ENCODE measurements at regions of chr15 and their contacts with region 1.

Region 1: GRCh38 chr15:63759752-63760151 is 74.0 kb downstream of the HERC1 start:
- DNase-seq: no peak
- H3K4me3 ChIP-seq: no peak overlapping the region
- H3K27ac ChIP-seq: no peak overlapping the region
- H3K4me1 ChIP-seq: peaks cover 9 to 22% of the 10 kb centered on the region in 2 donors
- H3K27me3 ChIP-seq: no peaks in the 10 kb centered on the region
- CTCF ChIP-seq: no peak
- POLR2A ChIP-seq: no peak

Region 2: DNA sequence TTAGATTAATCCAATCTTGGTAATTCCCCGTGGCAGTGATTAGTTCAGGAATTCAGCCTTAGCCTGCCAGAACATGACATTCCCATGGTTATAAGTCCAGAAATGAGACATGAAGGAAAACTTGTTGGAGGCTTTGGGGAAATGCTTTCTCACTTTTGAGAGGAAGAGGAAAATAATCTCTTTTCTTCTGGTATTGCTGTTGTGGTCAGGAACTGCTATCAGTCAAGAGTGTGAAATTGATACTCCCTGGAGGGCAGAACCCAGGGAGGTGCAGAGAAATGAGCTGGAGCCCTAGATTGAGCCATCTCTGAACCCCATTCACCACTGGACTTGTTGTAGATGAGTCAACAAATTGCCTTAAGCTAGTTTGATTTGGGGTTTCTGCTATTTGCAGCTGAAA is 521.0 kb before region 1 on chr15:
- intact Hi-C with region 1: no loop called
- DNase-seq: no peak
- H3K4me3 ChIP-seq: no peak overlapping the region
- H3K27ac ChIP-seq: no peak overlapping the region
- H3K4me1 ChIP-seq: peaks cover 24 to 26% of the 10 kb centered on the region in 2 donors
- H3K27me3 ChIP-seq: no peaks in the 10 kb centered on the region
- CTCF ChIP-seq: no peak
- POLR2A ChIP-seq: no peak

Region 3: GRCh38 chr15:64060716-64061115 is 301.0 kb after region 1 on chr15:
- intact Hi-C with region 1: loop called (anchors 5 kb)
- DNase-seq: no peak
- H3K4me3 ChIP-seq: no peak overlapping the region
- H3K27ac ChIP-seq: no peak overlapping the region
- H3K4me1 ChIP-seq: no peaks in the 10 kb centered on the region
- H3K27me3 ChIP-seq: no peaks in the 10 kb centered on the region
- CTCF ChIP-seq: no peak
- POLR2A ChIP-seq: no peak